ENCODE measurements at regions of chr18 and their contacts with region 1.

Region 1: GRCh38 chr18:24446953-24447538 is 13.4 kb upstream of the HRH4 start:
- DNase-seq: peak; percentile 3
- H3K4me3 ChIP-seq: no peak overlapping the region
- H3K27ac ChIP-seq: no peak overlapping the region
- H3K4me1 ChIP-seq: no peaks in the 10 kb centered on the region
- CTCF ChIP-seq: peak; percentile 49

Region 2: GRCh38 chr18:25795213-25795612 is 1348.2 kb after region 1 on chr18:
- CTCF ChIA-PET with region 1: no interaction called
- POLR2A ChIA-PET with region 1: interaction called, 11 read pairs
- intact Hi-C with region 1: no loop called
- DNase-seq: no peak
- H3K4me3 ChIP-seq: no peak overlapping the region
- H3K27ac ChIP-seq: no peak overlapping the region
- H3K4me1 ChIP-seq: no peaks in the 10 kb centered on the region
- CTCF ChIP-seq: no peak